Caco-2 (cell line): ENCODE measurements at regions of chr2 and their contacts with region 1.

Region 1: DNA sequence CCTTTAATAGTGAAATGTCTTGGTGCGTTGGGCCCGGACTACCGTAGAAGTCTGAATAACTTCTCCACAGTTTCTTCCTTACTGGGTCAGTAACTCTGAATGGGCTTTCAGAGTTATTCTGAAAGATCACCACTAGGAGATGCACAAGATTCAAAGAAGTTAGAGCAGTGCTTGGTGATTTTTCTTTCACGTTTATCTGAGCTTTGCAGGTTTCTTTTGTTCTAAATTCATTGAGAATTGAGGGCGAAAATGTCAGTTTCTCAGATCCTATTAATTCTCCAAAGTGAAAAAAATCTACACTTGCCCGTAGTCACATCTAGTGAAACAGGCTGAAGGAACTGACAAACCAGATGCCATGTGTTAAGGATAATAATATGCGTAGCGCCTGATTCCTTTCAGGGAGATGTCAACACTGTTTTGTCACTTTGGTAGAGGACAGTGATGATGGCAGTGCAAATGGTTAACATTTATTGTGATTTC is 70.1 kb downstream of the QPCT start:
- DNase-seq: peak in 1 of 2 experiments; percentile 51
- H3K4me3 ChIP-seq: no peak overlapping the region
- H3K4me3 Mint-ChIP-seq: no peak overlapping the region
- H3K27ac Mint-ChIP-seq: no peak overlapping the region
- H3K4me1 ChIP-seq: peaks cover 9% of the 10 kb centered on the region; the same call in 1 of the 2 replicates
- H3K4me1 Mint-ChIP-seq: peaks cover 17% of the 10 kb centered on the region
- H3K27me3 ChIP-seq: no peaks in the 10 kb centered on the region
- H3K27me3 Mint-ChIP-seq: no peaks in the 10 kb centered on the region
- CTCF ChIP-seq: peak; percentile 88 to 92

Region 2: GRCh38 chr2:37287966-37288365 is 126.5 kb before region 1 on chr2:
- CTCF ChIA-PET with region 1: no interaction called
- POLR2A ChIA-PET with region 1: no interaction called
- intact Hi-C with region 1: loop called (anchors 1 kb)
- DNase-seq: no peak
- H3K4me3 ChIP-seq: no peak overlapping the region
- H3K4me3 Mint-ChIP-seq: no peak overlapping the region
- H3K27ac Mint-ChIP-seq: no peak overlapping the region
- H3K4me1 ChIP-seq: no peaks in the 10 kb centered on the region
- H3K4me1 Mint-ChIP-seq: no peaks in the 10 kb centered on the region
- H3K27me3 ChIP-seq: no peaks in the 10 kb centered on the region
- H3K27me3 Mint-ChIP-seq: no peaks in the 10 kb centered on the region
- CTCF ChIP-seq: peak; percentile 20 to 30

Region 3: GRCh38 chr2:37350034-37350433 is 64.5 kb before region 1 on chr2:
- CTCF ChIA-PET with region 1: no interaction called
- POLR2A ChIA-PET with region 1: no interaction called
- intact Hi-C with region 1: no loop called
- DNase-seq: no peak
- H3K4me3 ChIP-seq: no peak overlapping the region
- H3K4me3 Mint-ChIP-seq: no peak overlapping the region
- H3K27ac Mint-ChIP-seq: no peak overlapping the region
- H3K4me1 ChIP-seq: peaks cover 17% of the 10 kb centered on the region
- H3K4me1 Mint-ChIP-seq: peaks cover 8% of the 10 kb centered on the region
- H3K27me3 ChIP-seq: no peaks in the 10 kb centered on the region
- H3K27me3 Mint-ChIP-seq: no peaks in the 10 kb centered on the region
- CTCF ChIP-seq: no peak

Region 4: DNA sequence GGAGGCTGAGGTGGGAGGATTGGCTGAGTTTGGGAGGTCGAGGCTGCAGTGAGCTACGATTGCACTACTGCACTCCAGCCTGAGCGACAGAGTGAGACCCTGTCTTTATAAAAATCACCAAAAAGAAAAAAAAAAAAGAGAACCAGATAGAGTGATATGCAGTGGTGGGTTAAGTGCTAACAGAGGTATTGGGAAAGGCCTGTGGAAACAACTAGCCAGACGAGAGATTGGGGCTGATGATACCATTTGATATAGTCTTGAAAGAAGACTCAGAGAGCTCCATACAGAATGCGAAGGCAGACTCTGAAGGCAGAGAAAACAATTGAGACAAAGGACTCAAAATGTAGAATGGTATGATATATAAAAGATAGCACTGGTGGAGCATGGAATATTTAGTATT is 122.8 kb after region 1 on chr2:
- CTCF ChIA-PET with region 1: interaction called, 10 read pairs
- POLR2A ChIA-PET with region 1: no interaction called
- intact Hi-C with region 1: loop called (anchors 1 kb)
- DNase-seq: no peak
- H3K4me3 ChIP-seq: no peak overlapping the region
- H3K4me3 Mint-ChIP-seq: no peak overlapping the region
- H3K27ac Mint-ChIP-seq: no peak overlapping the region
- H3K4me1 ChIP-seq: no peaks in the 10 kb centered on the region
- H3K4me1 Mint-ChIP-seq: peaks cover 10% of the 10 kb centered on the region
- H3K27me3 ChIP-seq: no peaks in the 10 kb centered on the region
- H3K27me3 Mint-ChIP-seq: no peaks in the 10 kb centered on the region
- CTCF ChIP-seq: no peak

Region 5: GRCh38 chr2:37635504-37636380 is 221.2 kb after region 1 on chr2:
- CTCF ChIA-PET with region 1: interaction called, 7 read pairs
- POLR2A ChIA-PET with region 1: no interaction called
- intact Hi-C with region 1: loop called (anchors 1 kb)
- DNase-seq: no peak
- H3K4me3 ChIP-seq: no peak overlapping the region
- H3K4me3 Mint-ChIP-seq: no peak overlapping the region
- H3K27ac Mint-ChIP-seq: peak overlapping the region; percentile 5
- H3K4me1 ChIP-seq: no peaks in the 10 kb centered on the region
- H3K4me1 Mint-ChIP-seq: peaks cover 12% of the 10 kb centered on the region
- H3K27me3 ChIP-seq: no peaks in the 10 kb centered on the region
- H3K27me3 Mint-ChIP-seq: no peaks in the 10 kb centered on the region
- CTCF ChIP-seq: no peak

Region 6: GRCh38 chr2:37672104-37672869 is 257.8 kb after region 1 on chr2:
- CTCF ChIA-PET with region 1: interaction called, 7 read pairs
- POLR2A ChIA-PET with region 1: no interaction called
- intact Hi-C with region 1: loop called (anchors 1 kb)
- DNase-seq: peak; percentile 94 to 95
- H3K4me3 ChIP-seq: peak overlapping the region; percentile 98
- H3K4me3 Mint-ChIP-seq: peak overlapping the region; percentile 73
- H3K27ac Mint-ChIP-seq: peak overlapping the region; percentile 20
- H3K4me1 ChIP-seq: peaks cover 47% of the 10 kb centered on the region
- H3K4me1 Mint-ChIP-seq: peaks cover 40% of the 10 kb centered on the region
- H3K27me3 ChIP-seq: no peaks in the 10 kb centered on the region
- H3K27me3 Mint-ChIP-seq: no peaks in the 10 kb centered on the region
- CTCF ChIP-seq: no peak

Region 7: GRCh38 chr2:37858197-37858711 is 443.7 kb after region 1 on chr2:
- CTCF ChIA-PET with region 1: no interaction called
- POLR2A ChIA-PET with region 1: interaction called, 11 read pairs
- intact Hi-C with region 1: no loop called
- DNase-seq: no peak
- H3K4me3 ChIP-seq: no peak overlapping the region
- H3K4me3 Mint-ChIP-seq: no peak overlapping the region
- H3K27ac Mint-ChIP-seq: no peak overlapping the region
- H3K4me1 ChIP-seq: 0 out of 2 replicates have a peak, but pooled peaks cover 8% of the 10 kb centered on the region
- H3K4me1 Mint-ChIP-seq: no peaks in the 10 kb centered on the region
- H3K27me3 ChIP-seq: no peaks in the 10 kb centered on the region
- H3K27me3 Mint-ChIP-seq: peaks cover 10% of the 10 kb centered on the region
- CTCF ChIP-seq: no peak